Prostate gland (tissue), 2 donors: ENCODE measurements at regions of chr17 and their contacts with region 1.

Region 1: GRCh38 chr17:50272711-50273653 is 1.3 kb upstream of the TMEM92 start:
- DNase-seq: no peak
- H3K4me3 ChIP-seq: peak overlapping the region; percentile 26 to 35
- H3K27ac ChIP-seq: peak overlapping the region; percentile 49 to 58
- H3K4me1 ChIP-seq: peaks cover 3% of the 10 kb centered on the region
- H3K27me3 ChIP-seq: no peaks in the 10 kb centered on the region
- CTCF ChIP-seq: peak; percentile 91 to 95 (median 93)
- POLR2A ChIP-seq: no peak

Region 2: DNA sequence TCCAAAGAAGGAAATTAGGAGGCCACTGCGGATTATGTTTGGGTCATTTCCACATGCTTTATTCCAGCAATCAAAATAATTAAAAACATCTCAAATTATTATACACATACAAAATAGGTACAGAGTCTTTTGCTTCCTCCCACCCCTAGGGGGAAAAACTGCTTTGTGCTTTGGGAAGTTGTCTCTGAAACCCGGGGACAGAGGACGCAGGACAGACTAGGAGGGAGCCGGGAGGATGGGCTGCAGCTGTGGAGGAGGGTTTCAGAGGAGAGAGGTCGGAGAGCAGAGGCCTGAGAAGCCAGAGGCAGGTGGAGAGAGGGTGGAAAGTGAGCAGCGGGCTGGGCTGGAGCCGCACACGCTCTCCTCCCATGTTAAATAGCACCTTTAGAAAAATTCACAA is 88.9 kb before region 1 on chr17:
- intact Hi-C with region 1: no loop called
- DNase-seq: no peak
- H3K4me3 ChIP-seq: no peak overlapping the region
- H3K27ac ChIP-seq: peak overlapping the region; percentile 20 to 35
- H3K4me1 ChIP-seq: no peaks in the 10 kb centered on the region
- H3K27me3 ChIP-seq: no peaks in the 10 kb centered on the region
- CTCF ChIP-seq: no peak
- POLR2A ChIP-seq: no peak

Region 3: DNA sequence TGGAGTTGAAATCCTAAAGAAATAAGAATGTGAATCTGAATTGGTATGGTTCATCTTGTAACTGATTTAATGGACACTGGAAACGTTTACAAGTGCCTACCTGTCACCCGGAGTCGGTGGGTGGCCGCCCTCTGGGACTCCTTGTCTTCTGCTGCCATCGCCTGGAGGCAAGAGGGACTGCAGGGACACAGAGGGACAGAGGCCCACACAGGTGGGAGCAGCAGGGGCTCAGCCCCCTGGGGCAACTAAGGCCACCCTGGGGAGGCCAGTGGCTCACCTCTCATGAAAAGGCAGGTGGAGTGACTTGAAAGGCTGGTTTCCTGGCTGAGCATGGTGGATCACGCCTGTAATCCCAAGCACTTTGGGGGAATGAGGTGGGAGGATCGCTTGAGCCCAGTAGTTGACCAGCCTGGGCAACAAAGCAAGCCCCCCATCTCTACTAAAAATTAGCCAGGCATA is 24.5 kb after region 1 on chr17:
- intact Hi-C with region 1: loop called (anchors 1 kb)
- DNase-seq: peak; percentile 81
- H3K4me3 ChIP-seq: no peak overlapping the region
- H3K27ac ChIP-seq: no peak overlapping the region
- H3K4me1 ChIP-seq: no peaks in the 10 kb centered on the region
- H3K27me3 ChIP-seq: no peaks in the 10 kb centered on the region
- CTCF ChIP-seq: peak; percentile 78 to 98 (median 92)
- POLR2A ChIP-seq: no peak